Head of caudate nucleus (tissue), 42 donors: ENCODE measurements at regions of chr3 and their contacts with region 1.

Region 1: GRCh38 chr3:126083913-126084767 is at the start of gene SLC41A3:
- DNase-seq: peak; percentile 61 to 94 (median 89)

Region 2: DNA sequence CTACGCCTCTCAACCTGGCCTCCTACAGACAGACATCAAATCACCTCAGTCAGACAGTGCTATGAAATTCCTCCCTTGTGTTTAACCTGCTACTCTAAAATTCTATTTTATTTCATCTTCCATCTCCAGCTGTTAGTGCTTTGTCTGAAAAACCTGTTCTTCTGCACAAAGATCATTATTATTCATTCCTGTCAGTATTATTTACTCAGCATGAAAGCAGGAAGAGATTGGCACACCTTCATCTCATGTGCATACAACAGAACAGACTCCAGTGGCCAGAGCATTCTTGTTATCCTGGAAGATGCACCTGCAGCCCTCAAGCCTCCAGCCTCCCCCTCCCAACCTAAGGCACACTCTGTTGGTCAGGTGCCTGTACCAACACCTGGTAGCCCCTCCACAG is 117.0 kb before region 1 on chr3:
- intact Hi-C with region 1: loop called (anchors 10 kb)
- DNase-seq: no peak

Region 3: GRCh38 chr3:126180477-126181397 is 96.6 kb after region 1 on chr3 and contains the start of gene ALDH1L1:
- intact Hi-C with region 1: no loop called
- DNase-seq: peak; percentile 28 to 91 (median 66)